Endothelial cell of umbilical vein (primary cell): ENCODE measurements at regions of chr3 and their contacts with region 1.

Region 1: DNA sequence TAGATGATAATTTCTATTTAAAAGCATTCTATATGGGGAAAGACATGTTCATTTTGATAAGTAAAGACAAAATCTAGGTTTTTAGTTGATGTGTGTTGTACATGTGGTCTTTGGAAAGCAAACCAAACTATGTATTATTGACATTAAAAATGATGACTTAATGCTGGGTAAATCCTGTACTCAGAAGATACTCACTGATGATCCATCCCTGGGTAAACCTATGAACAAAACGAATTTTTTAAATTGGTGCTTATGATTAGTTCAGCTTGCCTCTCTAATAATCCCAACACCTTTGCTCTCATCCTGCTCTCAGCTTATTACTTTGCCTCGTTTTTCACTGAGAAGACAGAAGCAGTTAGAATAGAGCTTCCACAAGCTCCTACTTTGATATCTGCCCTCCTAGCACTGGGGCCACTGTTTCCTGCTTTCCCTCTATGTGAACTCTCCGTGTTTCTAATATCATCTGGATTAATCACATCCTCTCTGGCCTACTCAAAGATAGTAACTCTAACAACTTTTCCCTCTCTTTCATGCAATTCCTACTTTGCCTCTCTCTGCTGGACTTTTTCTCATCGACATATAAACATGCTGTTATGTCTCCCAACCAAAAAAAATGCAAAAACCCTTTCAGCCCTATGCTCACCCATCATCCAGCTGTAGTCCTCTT is 29.3 kb downstream of the RARRES1 start:
- DNase-seq: peak; percentile 89
- H3K4me3 ChIP-seq: peak overlapping the region in 1 of 3 experiments; percentile 23
- H3K27ac ChIP-seq: peak overlapping the region; percentile 80
- H3K4me1 ChIP-seq: peaks cover 52% of the 10 kb centered on the region
- H3K27me3 ChIP-seq: no peaks in the 10 kb centered on the region
- CTCF ChIP-seq: no peak
- POLR2A ChIP-seq: peak; percentile 50

Region 2: GRCh38 chr3:158642005-158642404 is 60.9 kb before region 1 on chr3:
- CTCF ChIA-PET with region 1: no interaction called
- POLR2A ChIA-PET with region 1: no interaction called
- dilution Hi-C with region 1: no loop called
- intact Hi-C with region 1: no loop called
- DNase-seq: no peak
- H3K4me3 ChIP-seq: no peak overlapping the region
- H3K27ac ChIP-seq: no peak overlapping the region
- H3K4me1 ChIP-seq: peaks cover 8% of the 10 kb centered on the region
- H3K27me3 ChIP-seq: no peaks in the 10 kb centered on the region
- CTCF ChIP-seq: no peak
- POLR2A ChIP-seq: no peak

Region 3: DNA sequence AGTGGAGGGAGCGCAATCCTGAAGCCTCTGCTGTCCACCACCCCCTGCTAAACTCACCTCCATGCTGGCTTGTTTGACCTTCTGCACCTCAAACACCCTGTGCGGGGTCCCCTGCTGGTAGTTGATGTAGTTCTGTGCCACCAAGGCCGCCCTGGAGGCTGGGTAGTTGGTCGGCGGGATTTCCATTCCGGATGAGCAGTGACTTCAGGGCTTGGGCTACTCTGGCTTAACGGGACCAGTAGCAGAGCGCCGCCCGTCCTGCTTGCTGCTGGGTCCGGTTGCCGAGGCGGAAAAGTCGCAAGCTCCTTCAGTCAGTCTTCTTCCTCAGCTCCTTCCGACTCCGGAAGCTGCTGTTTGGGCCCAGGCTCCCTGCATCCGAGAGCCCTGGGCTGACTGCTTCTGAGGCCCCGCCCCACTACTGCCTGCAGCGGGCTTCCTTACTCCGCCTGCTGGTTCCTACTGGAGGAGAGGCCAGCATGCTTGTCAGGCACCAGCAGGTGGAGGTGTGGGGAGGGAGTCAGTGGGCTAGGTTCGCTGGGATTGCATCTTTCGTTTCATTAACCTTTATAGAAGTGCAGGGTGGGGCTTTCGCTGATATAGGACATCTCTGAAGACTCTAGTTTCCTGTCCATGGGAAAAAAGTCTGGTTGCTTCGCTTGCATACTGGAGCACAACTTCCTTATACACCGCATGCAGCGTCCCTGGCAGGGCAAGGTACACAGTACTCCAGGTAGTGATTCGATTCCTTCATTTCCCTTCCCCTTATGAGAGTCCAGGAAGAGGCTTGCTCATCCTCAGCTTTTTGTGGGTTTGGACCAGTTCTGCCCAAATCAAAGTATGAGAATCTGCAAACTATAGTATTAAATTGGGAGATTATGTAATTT is 30.4 kb before region 1 on chr3 and contains the start of gene LXN:
- CTCF ChIA-PET with region 1: interaction called, 6 read pairs
- POLR2A ChIA-PET with region 1: no interaction called
- dilution Hi-C with region 1: no loop called
- intact Hi-C with region 1: loop called (anchors 1 kb)
- DNase-seq: peak; percentile 92
- H3K4me3 ChIP-seq: peak within 1 kb of the TSS; percentile 39 to 90 (median 79)
- H3K27ac ChIP-seq: peak within 1 kb of the TSS; percentile 75
- H3K4me1 ChIP-seq: peaks cover 29% of the 10 kb centered on the region
- H3K27me3 ChIP-seq: no peaks in the 10 kb centered on the region
- CTCF ChIP-seq: peak; percentile 56 to 92
- POLR2A ChIP-seq: peak; percentile 87
- total RNA-seq, gene LXN: 118 and 119 TPM in 2 replicates

Region 4: GRCh38 chr3:158713094-158713499 is 10.1 kb after region 1 on chr3:
- CTCF ChIA-PET with region 1: interaction called, 20 read pairs
- POLR2A ChIA-PET with region 1: interaction called, 4 read pairs
- dilution Hi-C with region 1: no loop called
- intact Hi-C with region 1: loop called (anchors 1 kb)
- DNase-seq: peak; percentile 99
- H3K4me3 ChIP-seq: no peak overlapping the region
- H3K27ac ChIP-seq: peak overlapping the region; percentile 59
- H3K4me1 ChIP-seq: peaks cover 47% of the 10 kb centered on the region
- H3K27me3 ChIP-seq: no peaks in the 10 kb centered on the region
- CTCF ChIP-seq: no peak
- POLR2A ChIP-seq: no peak

Region 5: GRCh38 chr3:158718490-158719170 is 15.7 kb after region 1 on chr3:
- CTCF ChIA-PET with region 1: interaction called, 20 read pairs
- POLR2A ChIA-PET with region 1: interaction called, 6 read pairs
- dilution Hi-C with region 1: no loop called
- intact Hi-C with region 1: loop called (anchors 1 kb)
- DNase-seq: peak; percentile 95
- H3K4me3 ChIP-seq: no peak overlapping the region
- H3K27ac ChIP-seq: peak overlapping the region; percentile 13
- H3K4me1 ChIP-seq: peaks cover 38% of the 10 kb centered on the region
- H3K27me3 ChIP-seq: no peaks in the 10 kb centered on the region
- CTCF ChIP-seq: no peak
- POLR2A ChIP-seq: no peak